Thyroid gland (tissue), 4 donors: ENCODE measurements at regions of chr17 and their contacts with region 1.

Region 1: GRCh38 chr17:36632916-36633771 is 31.8 kb downstream of the MRM1 start:
- DNase-seq: no peak
- H3K4me3 ChIP-seq: no peak overlapping the region
- H3K27ac ChIP-seq: no peak overlapping the region
- H3K4me1 ChIP-seq: no peaks in the 10 kb centered on the region
- H3K27me3 ChIP-seq: no peaks in the 10 kb centered on the region
- CTCF ChIP-seq: no peak
- POLR2A ChIP-seq: no peak

Region 2: DNA sequence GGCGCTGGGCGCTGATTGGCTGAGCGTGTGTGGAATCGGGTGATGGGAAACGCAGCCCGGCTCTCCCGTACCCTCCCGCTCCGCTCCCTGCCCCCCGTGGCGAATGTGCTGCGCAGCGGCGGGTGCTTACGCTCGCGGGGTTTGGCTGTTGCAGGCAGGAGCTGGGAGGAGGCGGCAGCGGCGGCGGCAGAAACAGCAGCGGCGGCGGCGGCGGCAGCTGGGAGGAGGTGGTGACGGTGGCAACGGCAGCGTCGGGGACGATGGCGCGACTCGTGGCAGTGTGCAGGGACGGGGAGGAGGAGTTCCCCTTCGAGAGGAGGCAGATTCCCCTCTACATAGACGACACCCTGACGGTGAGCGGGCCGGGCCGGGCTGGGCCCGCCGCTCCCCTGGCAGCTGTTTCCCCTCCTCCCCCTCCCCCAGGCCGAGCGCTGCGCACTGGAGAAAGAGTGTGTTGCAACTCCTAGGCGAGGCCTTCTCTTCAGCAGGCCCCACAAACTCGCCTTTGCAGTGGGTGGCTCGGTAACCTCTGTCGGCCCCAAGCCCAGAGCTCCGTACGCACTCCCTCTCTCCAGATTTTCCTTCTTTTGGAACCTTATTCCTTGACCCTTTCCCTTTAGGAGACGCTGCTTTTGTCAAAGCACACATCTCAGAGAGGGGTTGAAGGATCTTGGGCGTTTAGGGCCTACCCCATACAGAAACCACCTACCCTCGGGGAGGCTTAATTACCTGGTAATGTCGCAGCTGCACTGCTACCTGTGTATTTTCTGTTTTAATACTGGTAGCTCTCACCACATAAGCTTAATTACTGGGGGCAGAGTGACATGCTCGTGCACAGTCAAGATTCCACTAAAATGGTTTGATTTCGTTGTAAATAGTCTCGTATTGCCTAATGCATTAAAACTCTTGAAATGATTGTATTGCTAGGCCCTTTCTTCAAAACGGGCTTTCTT is 87.4 kb before region 1 on chr17:
- intact Hi-C with region 1: no loop called
- DNase-seq: peak; percentile 98
- H3K4me3 ChIP-seq: peak overlapping the region; percentile 17 to 94 (median 43)
- H3K27ac ChIP-seq: peak overlapping the region; percentile 56 to 99 (median 97)
- H3K4me1 ChIP-seq: peaks cover 32 to 39% of the 10 kb centered on the region in 2 donors
- H3K27me3 ChIP-seq: no peaks in the 10 kb centered on the region
- CTCF ChIP-seq: no peak
- POLR2A ChIP-seq: peak in 1 of 2 donors; percentile 76

Region 3: DNA sequence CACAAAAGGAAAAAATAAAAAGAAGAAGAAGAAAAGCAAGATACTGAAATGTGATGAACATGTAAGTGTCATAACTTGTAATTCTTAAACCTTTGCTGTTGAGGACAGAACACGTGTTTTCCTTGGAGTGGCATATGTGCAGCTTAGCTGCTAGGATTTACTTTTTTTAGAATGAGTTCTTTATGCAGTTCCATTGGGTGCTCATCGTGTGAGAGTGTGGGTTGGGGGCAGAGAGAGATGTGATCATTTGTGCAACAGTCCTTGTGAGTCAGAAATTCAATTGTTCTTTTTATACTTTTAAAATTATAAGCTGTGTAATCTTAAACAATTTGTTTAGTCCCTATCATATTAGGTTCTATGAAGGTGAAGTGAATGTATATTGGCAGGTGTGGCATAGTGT is 47.0 kb before region 1 on chr17:
- intact Hi-C with region 1: no loop called
- DNase-seq: no peak
- H3K4me3 ChIP-seq: no peak overlapping the region
- H3K27ac ChIP-seq: no peak overlapping the region
- H3K4me1 ChIP-seq: peaks cover 0 to 2% of the 10 kb centered on the region in 2 donors
- H3K27me3 ChIP-seq: no peaks in the 10 kb centered on the region
- CTCF ChIP-seq: no peak
- POLR2A ChIP-seq: no peak

Region 4: DNA sequence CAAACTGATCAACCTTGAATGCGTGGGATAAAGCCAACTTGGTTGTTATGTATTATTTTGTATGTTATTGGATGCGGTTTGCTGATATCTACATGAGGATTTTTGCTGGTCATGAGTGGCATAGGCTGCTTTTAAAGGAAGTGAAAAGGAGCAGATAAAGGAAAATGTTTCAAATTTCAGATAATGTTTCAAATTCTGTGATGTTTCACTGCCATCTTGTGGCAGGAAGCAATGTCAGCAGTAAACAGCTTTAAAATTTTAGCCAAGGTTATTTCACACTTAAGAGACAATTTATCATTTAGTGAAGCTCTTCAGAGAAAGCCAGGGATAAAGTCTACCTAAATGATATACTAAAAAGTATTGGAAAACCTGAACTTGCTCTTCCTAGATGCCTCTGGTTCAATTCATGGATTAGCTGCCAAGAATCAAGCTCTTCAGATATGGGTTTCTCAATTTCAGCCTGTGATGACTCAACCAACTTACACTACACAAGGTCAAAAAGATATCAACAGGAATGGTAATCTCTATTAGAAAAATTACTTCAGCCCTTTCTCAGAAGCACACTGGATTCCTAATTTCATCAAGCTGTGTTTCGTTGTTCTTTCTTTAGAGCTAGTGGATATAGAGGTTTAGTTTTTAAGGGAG is 606.7 kb after region 1 on chr17:
- intact Hi-C with region 1: loop called (anchors 10 kb)
- DNase-seq: no peak
- H3K4me3 ChIP-seq: no peak overlapping the region
- H3K27ac ChIP-seq: no peak overlapping the region
- H3K4me1 ChIP-seq: no peaks in the 10 kb centered on the region
- H3K27me3 ChIP-seq: no peaks in the 10 kb centered on the region
- CTCF ChIP-seq: peak in 4 of 6 experiments; percentile 20 to 67 (median 56)
- POLR2A ChIP-seq: no peak